Activated T-helper 1 cell treated with anti-CD3 and anti-CD28 coated beads, Interleukin-12 subunit alpha, Interleukin-12 subunit beta, Interleukin-2, Interleukin-4 antibody, amounts not matched to agents 30 ng/mL and 10 ng/mL and 1 ng/mL, durations not matched to agents 14 hours and 24 hours and 36 hours (primary cell): ENCODE measurements at regions of chr18 and their contacts with region 1.

Region 1: GRCh38 chr18:11937874-11938478 is 29.9 kb upstream of the MPPE1 start:
- DNase-seq: peak; percentile 62
- H3K4me3 Mint-ChIP-seq: no peak overlapping the region
- H3K27ac Mint-ChIP-seq: no peak overlapping the region
- H3K4me1 Mint-ChIP-seq: no peaks in the 10 kb centered on the region
- H3K27me3 Mint-ChIP-seq: peaks cover 8% of the 10 kb centered on the region

Region 2: DNA sequence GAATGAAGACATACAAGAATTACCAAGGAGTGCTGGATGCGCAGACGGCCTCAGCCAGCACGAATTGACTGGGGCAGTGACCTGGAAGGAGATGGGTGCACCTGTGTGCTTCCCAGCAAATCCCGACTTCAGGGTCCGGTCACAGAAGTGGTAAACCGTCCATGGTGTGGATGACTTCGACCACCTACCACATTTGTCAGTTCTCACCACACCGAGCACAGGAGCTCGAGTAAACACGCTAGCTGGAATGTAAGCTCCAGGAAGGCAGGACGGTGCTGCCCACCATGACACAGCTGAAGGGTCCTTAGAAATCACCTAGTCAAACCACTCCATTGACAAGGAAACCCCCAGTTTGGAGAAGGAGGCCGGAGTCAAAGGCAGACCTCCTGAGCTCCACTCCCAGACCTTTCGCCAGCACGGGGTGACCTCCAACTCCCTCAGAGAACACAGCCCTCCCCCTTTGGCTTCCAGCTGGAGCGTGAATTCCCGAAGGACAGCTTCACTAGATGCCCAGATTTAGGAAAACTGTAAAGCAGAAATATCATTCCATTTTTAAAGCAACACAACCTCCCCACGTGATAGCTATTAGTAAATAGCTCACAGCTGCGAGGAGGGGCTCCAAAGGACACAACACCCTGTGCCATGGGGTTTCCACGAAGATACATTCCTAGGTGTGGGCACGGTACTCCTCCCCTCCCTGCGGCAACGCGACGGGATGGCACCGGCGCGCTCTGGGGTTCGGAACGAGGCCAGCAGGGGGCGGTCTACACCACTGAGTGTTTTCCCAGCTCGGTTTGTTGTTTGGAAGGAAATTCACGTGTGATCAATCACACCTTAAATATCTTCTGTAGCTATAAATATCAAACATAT is 283.0 kb before region 1 on chr18:
- intact Hi-C with region 1: loop called (anchors 5 kb)
- DNase-seq: no peak
- H3K4me3 Mint-ChIP-seq: no peak overlapping the region
- H3K27ac Mint-ChIP-seq: no peak overlapping the region
- H3K4me1 Mint-ChIP-seq: no peaks in the 10 kb centered on the region
- H3K27me3 Mint-ChIP-seq: peaks cover 15% of the 10 kb centered on the region

Region 3: GRCh38 chr18:11733031-11733430 is 204.9 kb before region 1 on chr18:
- intact Hi-C with region 1: loop called (anchors 1 kb)
- DNase-seq: peak; percentile 55
- H3K4me3 Mint-ChIP-seq: no peak overlapping the region
- H3K27ac Mint-ChIP-seq: no peak overlapping the region
- H3K4me1 Mint-ChIP-seq: no peaks in the 10 kb centered on the region
- H3K27me3 Mint-ChIP-seq: peaks cover 10% of the 10 kb centered on the region

Region 4: GRCh38 chr18:11995445-11996189 is 57.6 kb after region 1 on chr18:
- intact Hi-C with region 1: loop called (anchors 1 kb)
- DNase-seq: peak; percentile 41
- H3K4me3 Mint-ChIP-seq: peak overlapping the region; percentile 48
- H3K27ac Mint-ChIP-seq: peak overlapping the region; percentile 57
- H3K4me1 Mint-ChIP-seq: peaks cover 21% of the 10 kb centered on the region
- H3K27me3 Mint-ChIP-seq: no peaks in the 10 kb centered on the region

Region 5: DNA sequence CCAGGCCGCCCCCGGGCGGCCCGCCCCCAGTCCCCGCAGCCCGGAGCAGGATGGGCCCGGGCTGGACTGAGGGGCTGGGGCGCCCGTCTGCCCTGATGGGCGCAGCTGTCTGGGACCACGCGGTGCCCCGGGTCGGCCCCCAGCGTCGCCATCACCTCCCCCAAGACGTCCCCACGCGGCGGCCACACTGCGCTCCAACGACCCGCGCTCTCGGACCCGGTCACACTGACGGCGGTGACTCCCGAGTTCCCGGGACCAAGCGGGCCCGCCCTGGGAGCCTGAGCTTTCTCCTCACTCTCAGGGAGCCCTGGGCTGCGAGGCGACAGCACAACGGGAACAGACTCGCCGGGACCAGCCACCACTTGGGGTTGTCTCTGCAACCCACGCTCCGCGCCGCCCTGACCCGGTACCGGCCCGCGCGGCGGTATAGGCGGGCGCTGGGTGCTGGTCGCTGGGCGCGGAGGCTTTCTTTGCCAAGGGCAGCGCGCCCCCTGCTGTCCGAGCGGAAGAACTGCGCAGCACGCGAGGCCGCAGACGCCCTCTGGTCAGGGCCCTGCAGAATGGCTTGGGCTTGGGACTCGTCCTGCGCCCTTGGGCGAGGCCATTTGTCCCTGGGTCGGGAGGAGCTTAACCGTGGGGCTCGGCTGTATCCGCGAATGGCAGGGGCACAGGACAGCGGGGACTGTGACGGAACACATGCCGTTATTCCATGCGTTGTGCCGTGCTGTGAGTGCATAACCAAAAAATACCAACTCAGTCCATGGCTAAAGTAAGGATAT is 100.9 kb after region 1 on chr18:
- intact Hi-C with region 1: loop called (anchors 1 kb)
- DNase-seq: peak; percentile 69
- H3K4me3 Mint-ChIP-seq: peak overlapping the region; percentile 69
- H3K27ac Mint-ChIP-seq: no peak overlapping the region
- H3K4me1 Mint-ChIP-seq: peaks cover 19% of the 10 kb centered on the region
- H3K27me3 Mint-ChIP-seq: peaks cover 5% of the 10 kb centered on the region

Region 6: GRCh38 chr18:12236934-12237832 is 299.2 kb after region 1 on chr18:
- intact Hi-C with region 1: loop called (anchors 1 kb)
- DNase-seq: peak; percentile 52
- H3K4me3 Mint-ChIP-seq: no peak overlapping the region
- H3K27ac Mint-ChIP-seq: no peak overlapping the region
- H3K4me1 Mint-ChIP-seq: no peaks in the 10 kb centered on the region
- H3K27me3 Mint-ChIP-seq: peaks cover 26% of the 10 kb centered on the region